ENCODE measurements at regions of chr2 and their contacts with region 1.

Region 1: GRCh38 chr2:102806250-102806837 is 44.5 kb downstream of the TMEM182 start:
- DNase-seq: no peak
- ATAC-seq: peak; percentile 83
- H3K4me3 ChIP-seq: no peak overlapping the region
- H3K27ac ChIP-seq: no peak overlapping the region
- H3K4me1 ChIP-seq: peaks cover 3% of the 10 kb centered on the region
- H3K27me3 ChIP-seq: no peaks in the 10 kb centered on the region
- CTCF ChIP-seq: peak; percentile 85 to 90 (median 86)
- EP300 ChIP-seq: no peak
- POLR2A ChIP-seq: no peak
- RAD21 ChIP-seq: peak; percentile 77

Region 2: DNA sequence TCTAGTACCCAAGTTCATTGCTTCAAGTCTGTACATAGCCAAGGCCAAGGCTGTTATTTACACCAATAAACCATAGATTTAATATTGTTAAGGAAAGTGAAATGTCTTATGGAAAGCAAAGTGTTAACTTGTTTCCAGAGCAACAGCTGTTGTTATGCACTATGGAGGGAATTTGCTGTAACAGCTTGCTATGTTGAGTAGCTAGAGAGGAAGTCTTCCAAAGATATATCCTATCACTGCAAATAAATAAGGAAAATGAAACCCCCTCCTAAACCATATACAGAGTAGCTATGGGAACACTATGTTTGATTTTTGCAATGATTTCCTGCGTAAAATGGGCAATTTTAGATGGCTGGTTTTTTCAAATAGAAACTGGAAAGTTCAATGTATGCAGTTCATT is 23.4 kb before region 1 on chr2:
- CTCF ChIA-PET with region 1: no interaction called
- POLR2A ChIA-PET with region 1: no interaction called
- RAD21 ChIA-PET with region 1: no interaction called
- SMC1A ChIA-PET with region 1: no interaction called
- in situ Hi-C with region 1: no loop called
- intact Hi-C with region 1: no loop called
- DNase-seq: no peak
- ATAC-seq: no peak
- H3K4me3 ChIP-seq: no peak overlapping the region
- H3K27ac ChIP-seq: no peak overlapping the region
- H3K4me1 ChIP-seq: no peaks in the 10 kb centered on the region
- H3K27me3 ChIP-seq: no peaks in the 10 kb centered on the region
- CTCF ChIP-seq: no peak
- EP300 ChIP-seq: no peak
- POLR2A ChIP-seq: no peak
- RAD21 ChIP-seq: no peak

Region 3: GRCh38 chr2:102796337-102796736 is 10.0 kb before region 1 on chr2:
- CTCF ChIA-PET with region 1: interaction called, 14 read pairs
- POLR2A ChIA-PET with region 1: no interaction called
- RAD21 ChIA-PET with region 1: no interaction called
- SMC1A ChIA-PET with region 1: no interaction called
- in situ Hi-C with region 1: no loop called
- intact Hi-C with region 1: no loop called
- DNase-seq: no peak
- ATAC-seq: no peak
- H3K4me3 ChIP-seq: no peak overlapping the region
- H3K27ac ChIP-seq: no peak overlapping the region
- H3K4me1 ChIP-seq: no peaks in the 10 kb centered on the region
- H3K27me3 ChIP-seq: no peaks in the 10 kb centered on the region
- CTCF ChIP-seq: no peak
- EP300 ChIP-seq: no peak
- POLR2A ChIP-seq: no peak
- RAD21 ChIP-seq: no peak